ENCODE measurements at regions of chr4 and their contacts with region 1.

Region 1: GRCh38 chr4:152339576-152339975 is 196.3 kb downstream of the FBXW7 start:
- DNase-seq: no peak
- ATAC-seq: no peak
- H3K4me3 ChIP-seq: no peak overlapping the region
- H3K4me3 Mint-ChIP-seq: no peak overlapping the region
- H3K27ac ChIP-seq: no peak overlapping the region
- H3K27ac Mint-ChIP-seq: no peak overlapping the region
- H3K4me1 ChIP-seq: no peaks in the 10 kb centered on the region
- H3K4me1 Mint-ChIP-seq: no peaks in the 10 kb centered on the region
- H3K27me3 ChIP-seq: no peaks in the 10 kb centered on the region
- H3K27me3 Mint-ChIP-seq: no peaks in the 10 kb centered on the region

Region 2: GRCh38 chr4:152655272-152656129 is 315.9 kb after region 1 on chr4:
- CTCF ChIA-PET with region 1: interaction called in 1 of 2 experiments, 11 read pairs
- POLR2A ChIA-PET with region 1: no interaction called
- DNase-seq: no peak
- ATAC-seq: no peak
- H3K4me3 ChIP-seq: no peak overlapping the region
- H3K4me3 Mint-ChIP-seq: no peak overlapping the region
- H3K27ac ChIP-seq: no peak overlapping the region
- H3K27ac Mint-ChIP-seq: no peak overlapping the region
- H3K4me1 ChIP-seq: peaks cover 0 to 5% of the 10 kb centered on the region in 2 experiments
- H3K4me1 Mint-ChIP-seq: peaks cover 7 to 11% (median 10%) of the 10 kb centered on the region in 3 donors
- H3K27me3 ChIP-seq: no peaks in the 10 kb centered on the region
- H3K27me3 Mint-ChIP-seq: no peaks in the 10 kb centered on the region

Region 3: GRCh38 chr4:152779513-152780266 is 440.1 kb after region 1 on chr4 and contains the starts of genes ARFIP1 and TIGD4:
- CTCF ChIA-PET with region 1: no interaction called
- POLR2A ChIA-PET with region 1: no interaction called
- DNase-seq: peak; percentile 83 to 95 (median 91)
- ATAC-seq: peak; percentile 89 to 93 (median 90)
- H3K4me3 ChIP-seq: peak within 1 kb of the TSS; percentile 88 to 91
- H3K4me3 Mint-ChIP-seq: peak within 1 kb of the TSS; percentile 88 to 100 (median 98)
- H3K27ac ChIP-seq: peak within 1 kb of the TSS; percentile 75
- H3K27ac Mint-ChIP-seq: peak within 1 kb of the TSS; percentile 88 to 97
- H3K4me1 ChIP-seq: peaks cover 12 to 20% of the 10 kb centered on the region in 2 experiments
- H3K4me1 Mint-ChIP-seq: peaks cover 34 to 52% (median 48%) of the 10 kb centered on the region in 3 donors
- H3K27me3 ChIP-seq: no peaks in the 10 kb centered on the region
- H3K27me3 Mint-ChIP-seq: peaks cover 0 to 9% of the 10 kb centered on the region in 2 donors
- total RNA-seq, gene ARFIP1: 8.2 to 16.3 (median 12.1) TPM
- total RNA-seq, gene TIGD4: 0.13 to 0.28 (median 0.22) TPM in 4 of 5 donors, not detected in the other

Measured in T-cell (primary cell).